ENCODE measurements at regions of chr9 and their contacts with region 1.

Region 1: GRCh38 chr9:83996126-83996525 is 15.5 kb downstream of the RMI1 start:
- DNase-seq: no peak
- H3K4me3 ChIP-seq: no peak overlapping the region
- H3K27ac ChIP-seq: no peak overlapping the region
- H3K4me1 ChIP-seq: no peaks in the 10 kb centered on the region
- H3K27me3 ChIP-seq: no peaks in the 10 kb centered on the region
- CTCF ChIP-seq: no peak
- POLR2A ChIP-seq: no peak

Region 2: GRCh38 chr9:82299870-82300269 is 1696.3 kb before region 1 on chr9:
- intact Hi-C with region 1: no loop called
- DNase-seq: no peak
- H3K4me3 ChIP-seq: no peak overlapping the region
- H3K27ac ChIP-seq: no peak overlapping the region
- H3K4me1 ChIP-seq: no peaks in the 10 kb centered on the region
- H3K27me3 ChIP-seq: no peaks in the 10 kb centered on the region
- CTCF ChIP-seq: no peak
- POLR2A ChIP-seq: no peak

Region 3: GRCh38 chr9:83920927-83921707 is 75.0 kb before region 1 on chr9 and contains the start of gene KIF27:
- intact Hi-C with region 1: no loop called
- DNase-seq: peak; percentile 99 to 100 (median 99)
- H3K4me3 ChIP-seq: peak within 1 kb of the TSS in 2 of 4 donors; percentile 78 to 85
- H3K27ac ChIP-seq: peak within 1 kb of the TSS; percentile 83 to 98 (median 91)
- H3K4me1 ChIP-seq: peaks cover 5 to 10% of the 10 kb centered on the region in 2 donors
- H3K27me3 ChIP-seq: no peaks in the 10 kb centered on the region
- CTCF ChIP-seq: peak in 5 of 6 experiments; percentile 17 to 80 (median 44)
- POLR2A ChIP-seq: peak; percentile 59 to 86
- total RNA-seq, gene KIF27: 1.3 to 23.4 (median 4.8) TPM

Region 4: DNA sequence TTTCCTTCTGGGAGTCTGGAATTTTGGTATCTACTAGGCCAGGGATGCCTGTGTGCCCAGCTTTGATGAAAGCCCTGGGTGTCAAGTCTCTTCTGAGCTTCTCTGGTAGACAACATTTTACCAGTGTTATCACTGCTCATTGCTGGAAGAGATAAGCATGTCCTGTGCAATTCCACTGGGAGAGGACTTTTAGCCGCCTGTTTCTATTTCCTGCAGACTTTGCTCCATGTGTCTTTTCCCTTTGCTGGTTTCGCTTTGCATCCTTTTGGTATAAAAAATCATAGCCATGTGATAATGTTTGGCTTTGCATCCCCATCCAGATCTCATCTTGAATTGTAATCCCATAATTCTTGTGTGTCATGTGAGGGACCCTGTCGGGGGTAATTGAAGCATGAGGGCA is 181.3 kb after region 1 on chr9:
- intact Hi-C with region 1: loop called in 1 of 2 experiments (anchors 5 kb)
- DNase-seq: no peak
- H3K4me3 ChIP-seq: no peak overlapping the region
- H3K27ac ChIP-seq: no peak overlapping the region
- H3K4me1 ChIP-seq: peaks cover 13% of the 10 kb centered on the region in 2 donors
- H3K27me3 ChIP-seq: no peaks in the 10 kb centered on the region
- CTCF ChIP-seq: no peak
- POLR2A ChIP-seq: no peak